T-cell (primary cell): ENCODE measurements at regions of chr7 and their contacts with region 1.

Region 1: DNA sequence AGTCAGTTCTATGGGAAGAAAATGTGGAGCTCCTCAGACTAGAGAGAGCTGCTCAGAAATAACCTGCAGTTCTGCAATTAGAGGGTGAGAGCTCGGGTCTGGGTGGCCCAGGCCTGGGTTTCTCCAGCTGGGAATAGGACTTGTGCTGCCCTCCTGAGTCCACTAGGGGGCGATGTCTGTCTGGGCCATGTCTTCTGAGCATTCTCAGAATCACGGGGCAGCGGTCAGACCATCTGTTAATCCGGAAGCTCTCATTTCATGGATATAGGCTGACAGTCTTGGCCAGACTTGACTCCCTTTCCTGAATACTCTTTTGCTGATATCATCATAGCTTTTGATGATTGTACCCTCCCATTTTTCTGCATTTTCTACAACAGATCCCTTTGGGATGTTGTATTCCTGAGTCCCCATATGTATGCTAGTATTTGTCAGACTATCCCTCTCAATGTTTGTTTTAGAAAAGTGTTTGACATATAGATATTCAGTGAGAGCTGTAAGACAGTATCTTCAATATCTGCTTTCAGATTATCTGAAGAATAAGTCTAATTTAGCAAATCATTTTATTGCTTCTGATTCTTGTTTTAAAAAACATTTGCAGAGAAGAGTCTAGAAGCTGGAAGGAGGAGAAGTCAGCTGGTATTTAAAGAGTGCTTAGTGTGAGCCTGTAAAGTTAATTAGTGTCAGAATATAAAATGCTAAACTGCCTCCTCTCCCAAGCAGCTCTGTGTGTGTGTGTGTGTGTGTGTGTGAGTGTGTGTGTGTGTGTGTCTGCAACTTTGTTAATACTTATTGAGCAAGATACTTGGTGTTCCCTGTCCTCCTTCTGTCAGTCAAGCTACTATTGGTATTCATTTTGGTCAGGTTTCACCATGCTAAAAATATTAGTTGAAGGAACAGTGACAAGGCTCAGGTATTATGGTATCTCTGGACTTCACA is 38.0 kb downstream of the STARD3NL start:
- DNase-seq: peak; percentile 43 to 91 (median 69)
- ATAC-seq: peak; percentile 78 to 91 (median 89)
- H3K4me3 ChIP-seq: no peak overlapping the region
- H3K4me3 Mint-ChIP-seq: peak overlapping the region in 2 of 3 donors; percentile 24 to 34
- H3K27ac ChIP-seq: peak overlapping the region; percentile 68
- H3K27ac Mint-ChIP-seq: peak overlapping the region; percentile 93 to 95
- H3K4me1 ChIP-seq: peaks cover 0 to 41% of the 10 kb centered on the region in 2 experiments
- H3K4me1 Mint-ChIP-seq: peaks cover 19 to 44% (median 43%) of the 10 kb centered on the region in 3 donors
- H3K27me3 ChIP-seq: no peaks in the 10 kb centered on the region
- H3K27me3 Mint-ChIP-seq: no peaks in the 10 kb centered on the region

Region 2: DNA sequence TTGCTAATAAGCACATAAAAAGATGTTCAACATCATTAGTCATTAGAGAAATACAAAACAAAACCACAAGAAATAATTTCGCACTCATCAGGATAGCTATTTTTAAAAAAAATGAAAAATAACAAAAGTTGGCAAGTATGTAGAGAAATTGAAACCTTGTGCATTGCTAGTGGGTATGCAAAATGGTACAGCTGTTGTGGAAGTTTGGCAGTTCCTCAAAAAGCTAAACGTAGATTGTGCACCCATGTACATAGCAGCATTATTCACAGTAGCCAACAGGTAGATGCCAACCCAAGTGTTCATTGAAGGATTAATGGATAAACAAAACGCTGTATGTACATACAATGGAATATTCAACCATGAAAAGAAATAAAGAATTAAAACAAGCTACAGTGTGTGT is 73.3 kb before region 1 on chr7:
- CTCF ChIA-PET with region 1: no interaction called
- POLR2A ChIA-PET with region 1: no interaction called
- DNase-seq: no peak
- ATAC-seq: no peak
- H3K4me3 ChIP-seq: no peak overlapping the region
- H3K4me3 Mint-ChIP-seq: no peak overlapping the region
- H3K27ac ChIP-seq: no peak overlapping the region
- H3K27ac Mint-ChIP-seq: no peak overlapping the region
- H3K4me1 ChIP-seq: no peaks in the 10 kb centered on the region
- H3K4me1 Mint-ChIP-seq: no peaks in the 10 kb centered on the region
- H3K27me3 ChIP-seq: no peaks in the 10 kb centered on the region
- H3K27me3 Mint-ChIP-seq: peaks cover 0 to 4% of the 10 kb centered on the region in 2 donors

Region 3: GRCh38 chr7:38160003-38160571 is 55.9 kb before region 1 on chr7:
- CTCF ChIA-PET with region 1: no interaction called
- POLR2A ChIA-PET with region 1: no interaction called
- DNase-seq: no peak
- ATAC-seq: no peak
- H3K4me3 ChIP-seq: no peak overlapping the region
- H3K4me3 Mint-ChIP-seq: no peak overlapping the region
- H3K27ac ChIP-seq: no peak overlapping the region
- H3K27ac Mint-ChIP-seq: no peak overlapping the region
- H3K4me1 ChIP-seq: no peaks in the 10 kb centered on the region
- H3K4me1 Mint-ChIP-seq: no peaks in the 10 kb centered on the region
- H3K27me3 ChIP-seq: peaks cover 0 to 3% of the 10 kb centered on the region in 2 experiments
- H3K27me3 Mint-ChIP-seq: peaks cover 10 to 26% of the 10 kb centered on the region in 2 donors

Region 4: DNA sequence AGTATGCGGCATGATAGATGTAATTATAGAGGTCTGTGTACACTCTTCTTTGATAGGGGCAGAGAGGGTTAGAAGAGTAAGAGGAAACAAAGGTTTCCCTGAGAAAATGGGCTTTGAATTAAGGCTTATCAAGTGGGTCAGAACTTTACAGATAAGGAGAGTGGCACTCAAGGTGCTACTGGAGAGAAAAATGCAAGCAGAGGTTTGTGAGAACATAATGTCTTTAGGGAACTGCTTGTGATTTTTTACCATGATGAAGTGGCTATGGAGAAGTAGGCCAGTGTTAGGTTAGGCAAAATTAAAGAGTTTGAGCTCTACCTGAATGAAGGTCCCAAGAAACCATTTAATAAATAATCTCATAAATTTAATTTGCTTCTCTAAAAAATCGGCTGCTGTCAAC is 23.7 kb before region 1 on chr7:
- CTCF ChIA-PET with region 1: interaction called, 6 to 10 read pairs
- POLR2A ChIA-PET with region 1: no interaction called
- DNase-seq: no peak
- ATAC-seq: no peak
- H3K4me3 ChIP-seq: no peak overlapping the region
- H3K4me3 Mint-ChIP-seq: peak overlapping the region in 2 of 3 donors; percentile 1 to 5
- H3K27ac ChIP-seq: no peak overlapping the region
- H3K27ac Mint-ChIP-seq: peak overlapping the region in 1 of 2 donors; percentile 30
- H3K4me1 ChIP-seq: no peaks in the 10 kb centered on the region
- H3K4me1 Mint-ChIP-seq: peaks cover 49 to 57% (median 56%) of the 10 kb centered on the region in 3 donors
- H3K27me3 ChIP-seq: no peaks in the 10 kb centered on the region
- H3K27me3 Mint-ChIP-seq: no peaks in the 10 kb centered on the region

Region 5: GRCh38 chr7:38245409-38245977 is 29.5 kb after region 1 on chr7:
- CTCF ChIA-PET with region 1: no interaction called
- POLR2A ChIA-PET with region 1: no interaction called
- DNase-seq: peak in 5 of 35 experiments; percentile 9 to 59 (median 32)
- ATAC-seq: peak in 1 of 4 experiments; percentile 45
- H3K4me3 ChIP-seq: no peak overlapping the region
- H3K4me3 Mint-ChIP-seq: peak overlapping the region in 1 of 3 donors; percentile 17
- H3K27ac ChIP-seq: peak overlapping the region; percentile 67
- H3K27ac Mint-ChIP-seq: peak overlapping the region; percentile 36 to 73
- H3K4me1 ChIP-seq: peaks cover 0 to 21% of the 10 kb centered on the region in 2 experiments
- H3K4me1 Mint-ChIP-seq: peaks cover 0 to 34% (median 31%) of the 10 kb centered on the region in 3 donors
- H3K27me3 ChIP-seq: no peaks in the 10 kb centered on the region
- H3K27me3 Mint-ChIP-seq: no peaks in the 10 kb centered on the region

Region 6: DNA sequence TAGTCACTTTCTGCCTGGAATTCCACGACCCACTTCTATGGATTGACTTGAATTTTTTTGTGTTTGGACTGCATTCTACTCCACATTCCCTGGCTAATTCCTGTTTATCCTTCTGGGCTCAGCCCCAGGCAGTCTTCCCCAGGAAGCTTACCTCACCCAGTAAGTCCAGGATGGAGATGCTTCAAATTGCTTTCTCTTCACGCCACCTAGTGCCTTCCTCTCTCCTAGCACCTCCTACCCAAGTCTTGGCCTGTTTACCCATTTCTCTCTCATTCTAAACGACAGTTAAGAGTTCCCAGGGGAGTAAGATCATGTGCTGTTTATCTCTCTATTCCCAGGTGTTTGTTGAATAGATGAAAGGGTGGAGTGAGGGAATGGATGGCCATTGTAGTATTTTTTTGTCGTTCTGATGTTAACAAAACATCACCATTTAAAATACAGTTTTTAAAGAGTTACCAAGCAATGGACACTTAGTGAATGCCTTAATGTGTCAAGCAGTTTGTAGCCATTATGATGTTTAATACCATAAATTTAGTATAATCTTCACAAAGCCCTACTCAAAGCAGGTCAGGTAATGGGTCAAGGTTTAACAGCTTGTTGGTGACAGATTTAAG is 102.9 kb after region 1 on chr7:
- CTCF ChIA-PET with region 1: interaction called, 10 to 17 read pairs
- POLR2A ChIA-PET with region 1: interaction called in 1 of 2 experiments, 11 read pairs
- DNase-seq: peak in 2 of 35 experiments; percentile 26 to 57
- ATAC-seq: peak in 2 of 4 experiments; percentile 49 to 59
- H3K4me3 ChIP-seq: peak overlapping the region in 1 of 2 donors; percentile 47
- H3K4me3 Mint-ChIP-seq: peak overlapping the region; percentile 62 to 77 (median 72)
- H3K27ac ChIP-seq: peak overlapping the region; percentile 44
- H3K27ac Mint-ChIP-seq: peak overlapping the region; percentile 89 to 90
- H3K4me1 ChIP-seq: peaks cover 17 to 32% of the 10 kb centered on the region in 2 experiments
- H3K4me1 Mint-ChIP-seq: peaks cover 31 to 48% (median 36%) of the 10 kb centered on the region in 3 donors
- H3K27me3 ChIP-seq: no peaks in the 10 kb centered on the region
- H3K27me3 Mint-ChIP-seq: no peaks in the 10 kb centered on the region

Region 7: GRCh38 chr7:38351601-38352000 is 135.6 kb after region 1 on chr7:
- CTCF ChIA-PET with region 1: interaction called, 7 to 15 read pairs
- POLR2A ChIA-PET with region 1: no interaction called
- DNase-seq: no peak
- ATAC-seq: no peak
- H3K4me3 ChIP-seq: peak overlapping the region in 1 of 2 donors; percentile 2
- H3K4me3 Mint-ChIP-seq: peak overlapping the region; percentile 83 to 87 (median 86)
- H3K27ac ChIP-seq: no peak overlapping the region
- H3K27ac Mint-ChIP-seq: peak overlapping the region; percentile 98
- H3K4me1 ChIP-seq: peaks cover 3 to 22% of the 10 kb centered on the region in 2 experiments
- H3K4me1 Mint-ChIP-seq: peaks cover 62 to 71% (median 67%) of the 10 kb centered on the region in 3 donors
- H3K27me3 ChIP-seq: no peaks in the 10 kb centered on the region
- H3K27me3 Mint-ChIP-seq: no peaks in the 10 kb centered on the region